GM13977 (cell line): ENCODE measurements at regions of chr7 and their contacts with region 1.

Region 1: DNA sequence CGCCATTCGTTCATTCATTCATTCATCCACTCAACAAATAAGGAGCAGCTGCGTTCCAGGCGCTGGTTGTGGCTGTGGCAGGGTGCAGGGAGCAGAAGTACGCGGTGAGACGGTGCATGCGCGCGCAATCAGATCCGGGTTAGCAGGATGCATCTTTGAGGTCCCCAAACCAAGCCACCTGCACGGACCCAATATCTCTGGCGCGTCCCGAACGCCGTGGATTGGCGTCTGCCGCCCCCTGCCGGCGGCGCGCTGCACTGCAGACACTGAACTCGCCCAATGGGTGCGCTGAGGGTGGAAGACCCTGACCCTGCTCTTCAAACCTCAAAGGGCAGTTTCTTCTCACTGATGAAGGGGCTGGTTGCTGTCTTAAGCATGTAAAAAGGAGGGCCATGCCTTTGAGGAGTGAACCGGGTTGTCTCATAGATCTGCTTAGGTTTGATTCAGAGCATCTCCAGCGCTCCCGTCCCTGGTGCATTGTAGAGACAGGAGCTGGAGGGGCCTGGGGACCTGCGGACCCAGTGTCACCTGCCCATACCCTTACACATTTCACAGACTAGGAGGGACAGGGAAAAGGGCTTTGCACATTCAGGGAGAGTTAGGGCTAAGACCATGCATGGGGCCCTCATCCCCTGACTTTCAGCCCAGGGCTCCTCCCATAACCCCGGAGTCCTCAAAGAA is 102.5 kb downstream of the RAMP3 start:
- DNase-seq: peak; percentile 75
- CTCF ChIP-seq: peak; percentile 100

Region 2: DNA sequence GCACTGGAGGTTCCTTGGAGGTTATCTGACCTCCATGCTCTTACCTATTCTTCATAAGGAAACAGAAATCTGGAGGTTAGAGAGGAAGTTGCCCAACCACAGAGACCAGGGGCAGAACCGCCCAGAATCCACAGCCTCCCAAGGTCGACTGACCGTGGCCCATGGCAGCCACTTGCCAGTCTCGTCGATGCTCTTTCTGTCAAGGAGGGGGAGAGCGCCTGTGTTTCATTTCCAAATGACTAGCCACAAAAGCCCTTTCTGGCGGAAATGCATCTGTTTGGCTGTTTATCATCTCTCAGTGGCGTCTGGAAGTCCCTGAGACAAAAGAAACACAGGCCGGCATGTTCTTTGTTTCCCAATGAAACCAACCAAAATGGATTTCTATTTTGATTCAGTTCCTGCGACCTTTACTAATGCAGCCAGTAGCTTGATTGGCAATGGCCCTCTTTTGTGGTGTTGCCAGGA is 99.7 kb before region 1 on chr7:
- in situ Hi-C with region 1: loop called (anchors 10 kb)
- DNase-seq: no peak
- CTCF ChIP-seq: no peak